ENCODE measurements at regions of chr15 and their contacts with region 1.

Region 1: DNA sequence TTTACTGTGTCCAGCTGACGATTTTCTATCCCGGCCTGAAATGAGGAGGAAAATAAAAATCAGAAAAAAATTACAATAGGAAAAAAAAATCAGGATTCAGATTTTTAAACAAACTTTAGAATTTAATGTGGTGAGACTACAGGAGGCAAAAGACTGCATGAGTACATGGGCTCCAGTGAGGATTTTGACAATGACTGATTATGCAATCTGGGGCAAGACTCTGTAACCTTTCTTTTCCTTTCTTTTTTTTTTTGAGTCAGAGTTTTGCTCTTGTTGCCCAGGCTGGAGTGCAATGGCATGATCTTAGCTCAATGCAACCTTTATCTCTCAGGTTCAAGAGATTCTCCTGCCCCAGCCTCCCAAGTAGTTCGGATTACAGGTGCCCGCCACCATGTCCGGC is 29.9 kb downstream of the SPG11 start:
- DNase-seq: no peak
- ATAC-seq: no peak
- H3K4me3 ChIP-seq: no peak overlapping the region
- H3K27ac ChIP-seq: no peak overlapping the region
- H3K4me1 ChIP-seq: no peaks in the 10 kb centered on the region
- H3K27me3 ChIP-seq: no peaks in the 10 kb centered on the region
- CTCF ChIP-seq: no peak

Region 2: DNA sequence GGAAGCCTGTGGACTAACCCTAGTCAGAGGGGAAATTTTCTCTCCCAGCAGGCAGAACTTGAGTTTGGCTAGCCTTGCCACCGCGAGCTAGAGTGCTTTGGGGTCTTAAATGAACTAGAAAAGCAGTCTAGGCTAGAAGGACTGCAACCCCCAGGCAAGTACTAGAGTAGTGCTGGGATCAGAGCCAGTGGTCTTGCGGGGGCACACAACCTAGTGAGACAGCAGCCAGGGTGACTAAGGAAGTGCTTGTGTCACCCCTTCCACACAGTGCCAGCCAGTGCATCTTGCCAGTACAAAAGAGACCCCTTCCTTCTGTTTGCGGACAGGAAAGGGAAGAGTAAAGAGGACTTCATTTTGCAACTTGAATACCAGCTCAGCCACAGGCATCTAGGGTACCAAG is 286.1 kb before region 1 on chr15:
- CTCF ChIA-PET with region 1: no interaction called
- POLR2A ChIA-PET with region 1: interaction called, 12 read pairs
- in situ Hi-C with region 1: no loop called
- intact Hi-C with region 1: no loop called
- DNase-seq: no peak
- ATAC-seq: no peak
- H3K4me3 ChIP-seq: no peak overlapping the region
- H3K27ac ChIP-seq: no peak overlapping the region
- H3K4me1 ChIP-seq: no peaks in the 10 kb centered on the region
- H3K27me3 ChIP-seq: no peaks in the 10 kb centered on the region
- CTCF ChIP-seq: no peak

Region 3: DNA sequence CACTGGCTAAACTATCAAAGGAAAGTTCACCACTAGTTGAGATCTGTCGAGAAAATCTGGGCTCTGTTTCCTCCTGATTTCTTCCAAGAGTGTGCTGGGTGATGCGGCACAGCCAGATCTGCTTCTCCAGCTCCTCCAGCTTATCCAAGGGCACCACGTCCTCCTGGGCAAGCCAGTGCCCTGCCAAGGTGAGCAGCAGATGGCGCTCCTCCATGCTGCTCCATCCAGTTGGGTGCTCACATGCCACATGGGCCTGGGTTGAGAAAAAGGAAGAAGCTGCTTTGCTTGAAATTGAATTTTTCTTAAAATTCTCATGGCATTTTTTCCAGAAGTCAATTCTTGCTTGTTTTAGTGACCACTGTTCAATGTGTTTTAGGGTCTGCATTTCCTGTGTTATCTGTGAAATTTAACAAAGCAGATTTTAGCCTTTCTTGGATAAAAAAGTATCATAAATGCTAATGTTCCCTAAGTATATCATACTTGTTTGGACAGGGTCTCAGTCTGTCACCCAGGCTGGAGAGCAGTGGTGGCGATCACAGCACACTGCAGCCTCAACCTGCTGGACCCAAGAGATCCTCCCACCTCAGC is 49.3 kb before region 1 on chr15:
- CTCF ChIA-PET with region 1: no interaction called
- POLR2A ChIA-PET with region 1: no interaction called
- in situ Hi-C with region 1: no loop called
- intact Hi-C with region 1: no loop called
- DNase-seq: peak; percentile 36
- ATAC-seq: peak; percentile 95
- H3K4me3 ChIP-seq: no peak overlapping the region
- H3K27ac ChIP-seq: no peak overlapping the region
- H3K4me1 ChIP-seq: no peaks in the 10 kb centered on the region
- H3K27me3 ChIP-seq: no peaks in the 10 kb centered on the region
- CTCF ChIP-seq: peak; percentile 86